ENCODE measurements at regions of chr2 and their contacts with region 1.

Region 1: GRCh38 chr2:216687646-216688045 is 7.7 kb downstream of the IGFBP5 start:
- DNase-seq: no peak
- H3K4me3 ChIP-seq: no peak overlapping the region
- H3K4me3 Mint-ChIP-seq: no peak overlapping the region
- H3K27ac ChIP-seq: no peak overlapping the region
- H3K27ac Mint-ChIP-seq: no peak overlapping the region
- H3K4me1 ChIP-seq: peaks cover 16% of the 10 kb centered on the region
- H3K4me1 Mint-ChIP-seq: peaks cover 9 to 17% (median 15%) of the 10 kb centered on the region in 4 donors
- H3K27me3 ChIP-seq: peaks cover 4% of the 10 kb centered on the region
- H3K27me3 Mint-ChIP-seq: peaks cover 39 to 48% of the 10 kb centered on the region in 2 donors

Region 2: GRCh38 chr2:216445501-216445900 is 242.1 kb before region 1 on chr2:
- CTCF ChIA-PET with region 1: no interaction called
- POLR2A ChIA-PET with region 1: no interaction called
- intact Hi-C with region 1: no loop called
- DNase-seq: no peak
- H3K4me3 ChIP-seq: no peak overlapping the region
- H3K4me3 Mint-ChIP-seq: no peak overlapping the region
- H3K27ac ChIP-seq: no peak overlapping the region
- H3K27ac Mint-ChIP-seq: no peak overlapping the region
- H3K4me1 ChIP-seq: no peaks in the 10 kb centered on the region
- H3K4me1 Mint-ChIP-seq: no peaks in the 10 kb centered on the region
- H3K27me3 ChIP-seq: no peaks in the 10 kb centered on the region
- H3K27me3 Mint-ChIP-seq: no peaks in the 10 kb centered on the region

Region 3: GRCh38 chr2:217356781-217357180 is 669.1 kb after region 1 on chr2:
- CTCF ChIA-PET with region 1: no interaction called
- POLR2A ChIA-PET with region 1: no interaction called
- intact Hi-C with region 1: no loop called
- DNase-seq: no peak
- H3K4me3 ChIP-seq: no peak overlapping the region
- H3K4me3 Mint-ChIP-seq: no peak overlapping the region
- H3K27ac ChIP-seq: no peak overlapping the region
- H3K27ac Mint-ChIP-seq: no peak overlapping the region
- H3K4me1 ChIP-seq: no peaks in the 10 kb centered on the region
- H3K4me1 Mint-ChIP-seq: no peaks in the 10 kb centered on the region
- H3K27me3 ChIP-seq: no peaks in the 10 kb centered on the region
- H3K27me3 Mint-ChIP-seq: peaks cover 0 to 1% of the 10 kb centered on the region in 2 donors

Region 4: DNA sequence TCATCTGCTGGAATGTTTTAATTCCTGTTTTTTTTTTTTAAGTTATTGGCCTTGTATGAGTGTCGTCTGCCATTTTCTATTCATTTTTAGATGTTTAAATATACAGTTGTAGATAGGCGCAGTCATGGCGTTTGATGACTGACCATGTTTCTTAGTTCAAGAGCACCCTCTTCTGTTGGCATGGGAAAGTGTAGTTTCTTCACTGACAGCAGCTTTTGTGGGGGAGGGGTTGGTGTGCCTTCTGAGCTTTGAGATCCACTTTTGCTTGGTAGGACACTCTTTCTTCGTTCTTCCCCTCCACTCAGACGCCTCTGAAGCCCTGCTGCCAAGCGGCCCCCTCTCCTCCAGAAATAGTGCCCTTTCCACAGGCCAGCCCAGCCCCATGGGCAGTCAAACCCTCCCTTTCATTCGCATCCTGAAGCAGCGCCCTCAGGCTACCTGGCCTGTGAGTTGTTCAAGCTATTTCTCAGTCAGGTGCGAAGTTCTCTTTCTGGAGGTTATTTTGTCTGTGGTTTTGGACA is 823.2 kb after region 1 on chr2:
- CTCF ChIA-PET with region 1: interaction called, 4 read pairs
- POLR2A ChIA-PET with region 1: no interaction called
- intact Hi-C with region 1: loop called (anchors 2 kb)
- DNase-seq: peak in 4 of 5 donors; percentile 4 to 12 (median 6)
- H3K4me3 ChIP-seq: no peak overlapping the region
- H3K4me3 Mint-ChIP-seq: no peak overlapping the region
- H3K27ac ChIP-seq: no peak overlapping the region
- H3K27ac Mint-ChIP-seq: no peak overlapping the region
- H3K4me1 ChIP-seq: no peaks in the 10 kb centered on the region
- H3K4me1 Mint-ChIP-seq: peaks cover 0 to 5% (median 2%) of the 10 kb centered on the region in 4 donors
- H3K27me3 ChIP-seq: peaks cover 5% of the 10 kb centered on the region
- H3K27me3 Mint-ChIP-seq: peaks cover 0 to 4% of the 10 kb centered on the region in 2 donors

Measured in CD4-positive, alpha-beta memory T cell (primary cell).